ENCODE measurements at regions of chr18 and their contacts with region 1.

Region 1: DNA sequence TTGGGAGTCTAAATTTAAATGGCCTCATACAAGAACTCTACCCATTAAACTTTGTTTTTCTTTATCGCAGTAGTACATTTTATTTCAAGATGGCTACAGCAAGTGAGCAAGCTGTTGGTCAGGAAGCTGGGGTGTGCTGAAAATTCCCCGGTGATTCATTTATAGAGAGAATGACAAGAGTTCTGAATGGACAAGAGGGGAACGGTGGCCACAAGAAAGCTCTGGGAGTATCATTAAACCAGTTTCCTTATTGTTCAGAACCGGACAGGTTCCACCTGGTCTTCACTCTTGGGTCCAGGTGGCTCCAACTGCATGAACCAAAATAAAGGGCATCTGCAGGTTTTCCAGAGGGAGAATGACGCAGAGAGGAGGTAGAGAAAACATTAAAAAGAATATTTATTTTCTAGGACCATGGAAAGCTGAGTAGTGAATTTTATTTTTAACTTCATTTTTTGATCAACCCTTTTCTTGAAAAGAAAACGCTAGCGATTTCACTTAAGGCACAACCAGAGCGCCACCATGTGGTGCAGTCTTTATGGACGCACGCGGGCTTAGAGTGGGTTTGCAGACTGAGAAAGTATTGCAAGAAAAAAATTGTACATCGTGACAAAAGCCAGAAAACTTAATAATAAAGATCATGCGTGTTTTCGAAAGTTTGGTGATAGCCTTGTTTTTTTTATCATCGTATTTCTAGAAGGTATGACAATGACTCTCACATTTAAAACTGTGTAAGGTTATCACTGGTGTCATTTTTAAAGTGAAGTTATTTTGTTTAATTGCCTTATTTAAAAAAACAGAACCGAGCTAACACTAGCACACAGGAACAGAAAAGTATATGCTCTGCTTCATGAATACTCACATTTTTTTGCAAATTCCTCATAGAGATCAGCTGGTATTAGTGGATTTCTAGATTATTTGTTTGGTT is 97.9 kb upstream of the NOL4 start:
- DNase-seq: no peak
- H3K4me3 ChIP-seq: peak overlapping the region in 1 of 2 donors; percentile 11
- H3K27ac ChIP-seq: no peak overlapping the region
- H3K4me1 ChIP-seq: no peaks in the 10 kb centered on the region
- H3K27me3 ChIP-seq: no peaks in the 10 kb centered on the region
- CTCF ChIP-seq: peak in 2 of 3 experiments; percentile 53 to 56

Region 2: GRCh38 chr18:34122724-34123334 is 199.8 kb before region 1 on chr18:
- intact Hi-C with region 1: loop called (anchors 2 kb)
- DNase-seq: no peak
- H3K4me3 ChIP-seq: no peak overlapping the region
- H3K27ac ChIP-seq: no peak overlapping the region
- H3K4me1 ChIP-seq: no peaks in the 10 kb centered on the region
- H3K27me3 ChIP-seq: no peaks in the 10 kb centered on the region
- CTCF ChIP-seq: peak; percentile 16 to 78 (median 75)

Region 3: GRCh38 chr18:34224423-34225217 is 98.0 kb before region 1 on chr18 and contains the start of gene NOL4:
- intact Hi-C with region 1: no loop called
- DNase-seq: peak in 1 of 2 donors; percentile 72
- H3K4me3 ChIP-seq: peak within 1 kb of the TSS; percentile 54 to 69
- H3K27ac ChIP-seq: no peak within 1 kb of the TSS
- H3K4me1 ChIP-seq: peaks cover 3% of the 10 kb centered on the region in 2 donors
- H3K27me3 ChIP-seq: no peaks in the 10 kb centered on the region
- CTCF ChIP-seq: peak in 2 of 3 experiments; percentile 15 to 37
- total RNA-seq, gene NOL4: not detected

Measured in ascending aorta (tissue), 2 donors.